ENCODE measurements at regions of chr17 and their contacts with region 1.

Region 1: GRCh38 chr17:45098869-45099616 is 33.3 kb downstream of the PLCD3 start:
- DNase-seq: peak; percentile 63 to 95
- H3K4me3 ChIP-seq: no peak overlapping the region
- H3K27ac ChIP-seq: no peak overlapping the region
- H3K4me1 ChIP-seq: no peaks in the 10 kb centered on the region; a peak in 1 of 7 replicates
- H3K27me3 ChIP-seq: no peaks in the 10 kb centered on the region
- CTCF ChIP-seq: peak; percentile 78 to 96 (median 95)
- EP300 ChIP-seq: no peak
- POLR2A ChIP-seq: no peak
- RAD21 ChIP-seq: peak; percentile 73 to 76

Region 2: DNA sequence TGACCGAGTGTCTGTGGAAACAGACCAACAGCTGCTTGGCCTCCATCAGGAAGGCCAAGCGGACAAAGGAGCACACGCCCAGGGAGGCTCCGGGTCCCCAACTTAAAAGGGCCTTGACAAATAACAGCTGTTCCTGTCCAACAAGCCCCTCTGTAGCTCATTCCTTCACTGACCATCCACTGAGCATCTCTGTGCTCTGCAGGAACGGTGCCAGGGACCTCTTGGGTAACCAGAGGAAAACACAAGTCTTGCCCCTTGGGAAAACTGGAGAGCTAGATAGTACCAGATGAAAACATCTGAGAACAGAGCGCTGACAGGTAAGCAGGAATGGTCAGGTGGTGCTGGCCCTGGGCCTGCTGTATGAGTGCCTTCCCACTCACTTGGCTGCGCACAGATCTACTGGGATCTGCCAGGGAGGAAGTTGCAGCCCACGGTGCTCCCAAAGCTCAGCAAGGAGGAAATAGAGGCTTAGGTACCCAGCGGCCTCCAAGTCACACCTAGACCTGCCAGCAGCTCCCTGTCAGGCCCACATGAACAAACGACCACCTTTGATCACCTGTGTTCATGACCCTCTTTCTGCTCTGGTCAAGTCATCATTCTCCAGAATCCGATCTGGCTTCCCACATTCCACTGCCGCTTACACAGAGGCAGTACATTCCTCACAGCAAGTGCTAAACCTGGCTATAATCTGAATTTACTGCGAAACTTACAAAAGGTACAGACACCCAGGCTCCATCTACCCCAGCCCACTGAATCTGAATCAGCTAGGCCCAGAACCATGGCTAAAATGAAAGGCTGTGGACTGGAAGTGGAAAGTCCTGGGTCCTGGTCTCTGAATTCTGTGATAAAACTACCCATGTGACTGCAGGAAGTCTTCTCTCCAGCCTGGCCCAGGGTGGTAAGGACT is 60.1 kb before region 1 on chr17:
- CTCF ChIA-PET with region 1: interaction called, 11 read pairs
- POLR2A ChIA-PET with region 1: interaction called, 4 read pairs
- DNase-seq: no peak
- H3K4me3 ChIP-seq: no peak overlapping the region
- H3K27ac ChIP-seq: no peak overlapping the region
- H3K4me1 ChIP-seq: peaks cover 4 to 11% (median 7%) of the 10 kb centered on the region in 4 experiments
- H3K27me3 ChIP-seq: no peaks in the 10 kb centered on the region
- CTCF ChIP-seq: no peak
- EP300 ChIP-seq: no peak
- POLR2A ChIP-seq: no peak
- RAD21 ChIP-seq: no peak

Region 3: GRCh38 chr17:45087504-45087975 is 11.5 kb before region 1 on chr17:
- CTCF ChIA-PET with region 1: interaction called, 19 read pairs
- POLR2A ChIA-PET with region 1: interaction called, 5 read pairs
- DNase-seq: no peak
- H3K4me3 ChIP-seq: no peak overlapping the region
- H3K27ac ChIP-seq: no peak overlapping the region
- H3K4me1 ChIP-seq: peaks cover 0 to 7% (median 0%) of the 10 kb centered on the region in 4 experiments; a peak in 3 of 7 replicates
- H3K27me3 ChIP-seq: no peaks in the 10 kb centered on the region
- CTCF ChIP-seq: no peak
- EP300 ChIP-seq: no peak
- POLR2A ChIP-seq: no peak
- RAD21 ChIP-seq: no peak

Region 4: GRCh38 chr17:45115871-45116724 is 17.1 kb after region 1 on chr17:
- CTCF ChIA-PET with region 1: interaction called, 50 read pairs
- POLR2A ChIA-PET with region 1: interaction called, 7 read pairs
- DNase-seq: no peak
- H3K4me3 ChIP-seq: no peak overlapping the region
- H3K27ac ChIP-seq: no peak overlapping the region
- H3K4me1 ChIP-seq: peaks cover 0 to 9% (median 4%) of the 10 kb centered on the region in 4 experiments; a peak in 3 of 7 replicates
- H3K27me3 ChIP-seq: no peaks in the 10 kb centered on the region
- CTCF ChIP-seq: no peak
- EP300 ChIP-seq: no peak
- POLR2A ChIP-seq: no peak
- RAD21 ChIP-seq: no peak

Region 5: DNA sequence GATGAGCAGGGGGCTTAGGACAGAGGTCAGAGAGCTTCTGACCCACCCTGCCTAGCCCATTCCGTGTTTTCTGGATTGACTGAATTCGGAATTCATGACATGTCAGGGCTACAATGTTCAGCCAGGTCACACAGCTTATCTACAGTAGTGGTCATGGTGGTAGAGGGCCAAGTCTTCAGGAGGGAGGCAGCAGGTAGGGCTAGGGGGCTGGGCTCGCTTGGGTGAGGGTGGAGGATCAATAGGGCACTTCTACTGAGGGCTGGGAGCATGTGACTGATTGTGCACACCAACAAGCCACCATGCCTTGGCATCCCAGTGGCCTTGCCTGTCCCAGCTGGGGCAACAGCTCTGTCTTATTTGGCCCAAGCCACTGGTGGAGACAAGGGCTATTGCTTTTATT is 65.8 kb after region 1 on chr17:
- CTCF ChIA-PET with region 1: no interaction called
- POLR2A ChIA-PET with region 1: no interaction called
- DNase-seq: no peak
- H3K4me3 ChIP-seq: no peak overlapping the region
- H3K27ac ChIP-seq: no peak overlapping the region
- H3K4me1 ChIP-seq: peaks cover 0 to 9% (median 3%) of the 10 kb centered on the region in 4 experiments; a peak in 3 of 7 replicates
- H3K27me3 ChIP-seq: no peaks in the 10 kb centered on the region
- CTCF ChIP-seq: no peak
- EP300 ChIP-seq: no peak
- POLR2A ChIP-seq: no peak
- RAD21 ChIP-seq: no peak

Region 6: GRCh38 chr17:45197555-45198334 is 98.7 kb after region 1 on chr17:
- CTCF ChIA-PET with region 1: interaction called, 10 read pairs
- POLR2A ChIA-PET with region 1: no interaction called
- DNase-seq: peak; percentile 90 to 100
- H3K4me3 ChIP-seq: peak overlapping the region in 1 of 4 experiments; percentile 35; a peak in 2 of 8 replicates
- H3K27ac ChIP-seq: no peak overlapping the region
- H3K4me1 ChIP-seq: peaks cover 2 to 9% (median 7%) of the 10 kb centered on the region in 4 experiments; a peak in 5 of 7 replicates
- H3K27me3 ChIP-seq: no peaks in the 10 kb centered on the region
- CTCF ChIP-seq: peak; percentile 97 to 99 (median 99)
- EP300 ChIP-seq: peak in 1 of 2 experiments; percentile 55; a peak in 1 of 3 replicates
- POLR2A ChIP-seq: 0 out of 3 replicates have a peak, but pooled peaks of 1 of the 2 experiments have one; percentile 48
- RAD21 ChIP-seq: peak; percentile 93 to 100

Measured in H1 (cell line).